ENCODE measurements at regions of chr12 and their contacts with region 1.

Region 1: DNA sequence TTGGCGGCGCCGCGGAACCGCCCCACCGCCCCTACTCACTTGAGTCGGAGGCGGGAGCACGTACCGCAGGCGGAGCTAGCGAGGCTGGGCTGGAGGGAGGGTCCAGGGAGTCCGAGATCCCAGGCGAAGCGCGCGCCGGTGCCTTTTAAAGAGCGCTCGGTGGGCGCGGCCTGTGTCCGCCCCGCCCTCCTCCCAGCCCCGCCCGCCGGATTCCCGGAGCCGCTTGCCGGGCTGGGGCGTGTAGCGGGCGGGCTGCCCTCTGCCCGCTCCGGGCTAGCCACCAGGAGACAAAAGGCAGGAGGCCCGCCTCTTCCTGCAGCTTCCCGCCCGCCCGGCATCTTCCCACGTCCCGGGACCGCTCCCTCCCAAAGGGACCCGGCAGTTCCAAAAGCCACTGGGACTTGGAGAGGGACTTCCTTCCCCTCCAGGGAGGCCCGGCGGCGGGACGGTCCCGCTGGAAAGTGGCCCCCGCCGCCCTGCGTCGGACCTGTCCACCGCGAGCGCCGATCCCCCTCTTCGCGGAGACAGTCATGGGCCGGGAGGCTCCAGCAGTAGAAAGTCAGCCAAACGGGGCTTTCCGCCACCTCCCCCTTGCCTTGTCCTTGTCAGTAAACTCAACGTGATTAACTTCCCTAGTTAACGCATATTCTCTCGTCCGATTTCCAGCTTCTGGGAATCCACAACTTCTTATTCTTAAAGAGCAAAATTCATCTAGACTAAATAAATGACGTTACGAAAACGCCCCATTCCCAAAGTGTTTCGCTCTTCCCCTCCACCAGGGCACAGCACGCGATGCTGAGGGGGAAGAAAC is at the start of gene CSRP2:
- DNase-seq: peak; percentile 87
- ATAC-seq: peak; percentile 91
- H3K4me3 ChIP-seq: peak within 1 kb of the TSS; percentile 64
- H3K27ac ChIP-seq: peak within 1 kb of the TSS; percentile 89
- H3K4me1 ChIP-seq: peaks cover 14% of the 10 kb centered on the region
- H3K27me3 ChIP-seq: no peaks in the 10 kb centered on the region
- CTCF ChIP-seq: peak; percentile 34
- POLR2A ChIP-seq: peak; percentile 97
- RAD21 ChIP-seq: peak; percentile 35
- total RNA-seq, gene CSRP2: 156 and 157 TPM in 2 replicates

Region 2: GRCh38 chr12:76713130-76713529 is 166.0 kb before region 1 on chr12:
- CTCF ChIA-PET with region 1: no interaction called
- POLR2A ChIA-PET with region 1: no interaction called
- dilution Hi-C with region 1: no loop called
- in situ Hi-C with region 1: no loop called
- intact Hi-C with region 1: no loop called
- DNase-seq: no peak
- ATAC-seq: 0 out of 2 replicates have a peak, but pooled peaks have one; percentile 42
- H3K4me3 ChIP-seq: no peak overlapping the region
- H3K27ac ChIP-seq: no peak overlapping the region
- H3K4me1 ChIP-seq: peaks cover 10% of the 10 kb centered on the region
- H3K27me3 ChIP-seq: no peaks in the 10 kb centered on the region
- CTCF ChIP-seq: no peak
- POLR2A ChIP-seq: no peak
- RAD21 ChIP-seq: no peak

Region 3: DNA sequence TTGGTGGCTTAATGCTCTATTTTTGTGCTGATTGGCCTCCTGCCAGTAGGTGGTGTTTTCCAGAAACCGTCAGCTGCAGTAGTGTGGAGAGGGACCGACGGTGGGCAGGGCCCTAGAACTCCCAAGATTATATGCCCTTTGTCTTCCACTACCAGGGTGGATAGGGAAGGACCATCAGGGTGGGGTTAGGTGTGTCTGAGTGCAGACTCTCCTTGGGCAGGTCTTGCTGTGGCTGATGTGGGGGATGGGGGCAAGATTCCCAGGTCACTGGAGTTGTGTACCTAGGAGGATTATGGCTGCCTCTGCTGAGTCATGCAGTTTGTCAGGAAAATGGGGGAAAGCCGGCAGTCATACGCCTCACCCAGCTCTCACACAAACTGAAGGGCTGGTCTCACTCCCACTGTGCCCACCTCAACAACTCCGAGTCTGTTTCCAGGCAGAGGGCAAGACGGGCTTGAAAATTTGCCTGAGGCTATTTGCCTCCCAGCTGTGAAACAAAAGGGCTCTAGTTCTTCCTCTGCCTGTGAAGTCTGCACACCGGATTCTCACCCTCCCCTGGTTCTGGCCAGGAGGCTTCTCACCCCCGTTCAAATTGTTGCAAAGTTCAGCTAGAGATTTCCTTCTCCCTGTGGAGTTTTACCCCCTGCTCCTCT is 140.0 kb before region 1 on chr12:
- CTCF ChIA-PET with region 1: no interaction called
- POLR2A ChIA-PET with region 1: no interaction called
- dilution Hi-C with region 1: no loop called
- in situ Hi-C with region 1: no loop called
- intact Hi-C with region 1: no loop called
- DNase-seq: no peak
- ATAC-seq: no peak
- H3K4me3 ChIP-seq: no peak overlapping the region
- H3K27ac ChIP-seq: no peak overlapping the region
- H3K4me1 ChIP-seq: no peaks in the 10 kb centered on the region
- H3K27me3 ChIP-seq: no peaks in the 10 kb centered on the region
- CTCF ChIP-seq: no peak
- POLR2A ChIP-seq: no peak
- RAD21 ChIP-seq: no peak

Region 4: GRCh38 chr12:76864791-76865400 is 14.2 kb before region 1 on chr12:
- CTCF ChIA-PET with region 1: interaction called, 3 read pairs
- POLR2A ChIA-PET with region 1: interaction called, 6 read pairs
- dilution Hi-C with region 1: no loop called
- in situ Hi-C with region 1: no loop called
- intact Hi-C with region 1: loop called (anchors 1 kb)
- DNase-seq: peak; percentile 65
- ATAC-seq: peak; percentile 30
- H3K4me3 ChIP-seq: no peak overlapping the region
- H3K27ac ChIP-seq: no peak overlapping the region
- H3K4me1 ChIP-seq: peaks cover 17% of the 10 kb centered on the region
- H3K27me3 ChIP-seq: no peaks in the 10 kb centered on the region
- CTCF ChIP-seq: no peak
- POLR2A ChIP-seq: no peak
- RAD21 ChIP-seq: no peak

Region 5: DNA sequence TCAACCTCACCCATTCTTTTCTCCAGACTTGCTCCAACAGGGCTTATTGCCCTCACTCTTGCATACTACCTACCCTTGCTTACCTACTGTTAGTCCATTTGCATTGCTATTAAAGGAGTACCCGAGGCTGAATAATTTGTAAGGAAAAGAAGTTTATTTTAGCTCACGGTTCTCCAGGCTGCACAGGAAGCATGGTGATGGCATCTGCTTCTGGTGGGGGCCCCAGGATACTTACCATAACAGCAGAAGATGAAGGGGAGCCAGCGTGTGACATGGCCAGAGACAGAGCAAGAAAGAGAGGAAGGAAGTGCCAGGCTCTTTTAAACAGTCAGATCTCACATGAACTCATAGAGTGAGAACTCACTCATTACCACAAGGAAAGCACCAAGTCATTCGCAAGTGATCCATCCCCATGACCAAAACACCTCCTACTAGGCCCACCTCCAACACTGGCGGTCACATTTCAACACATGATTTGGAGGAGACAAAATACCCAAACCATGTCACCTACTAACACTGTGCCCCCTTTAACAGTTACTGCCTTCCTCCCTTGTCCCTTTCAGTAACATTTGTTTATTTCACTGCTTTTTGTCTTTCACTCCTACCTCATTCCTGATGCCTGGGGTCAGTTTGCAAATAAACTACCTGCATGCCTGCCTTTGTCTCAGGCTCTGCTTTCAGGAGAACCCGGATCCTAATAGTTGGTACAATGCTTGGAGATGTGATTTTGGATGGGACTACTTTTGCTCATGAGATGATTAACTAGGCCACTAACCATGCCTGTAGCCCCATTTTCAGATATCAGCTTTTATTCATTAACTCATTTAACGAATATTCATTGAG is 41.3 kb after region 1 on chr12:
- CTCF ChIA-PET with region 1: interaction called, 3 read pairs
- POLR2A ChIA-PET with region 1: no interaction called
- dilution Hi-C with region 1: no loop called
- in situ Hi-C with region 1: no loop called
- intact Hi-C with region 1: loop called (anchors 5 kb)
- DNase-seq: no peak
- ATAC-seq: no peak
- H3K4me3 ChIP-seq: no peak overlapping the region
- H3K27ac ChIP-seq: no peak overlapping the region
- H3K4me1 ChIP-seq: peaks cover 4% of the 10 kb centered on the region; the same call in 1 of the 2 replicates
- H3K27me3 ChIP-seq: no peaks in the 10 kb centered on the region
- CTCF ChIP-seq: no peak
- POLR2A ChIP-seq: no peak
- RAD21 ChIP-seq: no peak

Region 6: DNA sequence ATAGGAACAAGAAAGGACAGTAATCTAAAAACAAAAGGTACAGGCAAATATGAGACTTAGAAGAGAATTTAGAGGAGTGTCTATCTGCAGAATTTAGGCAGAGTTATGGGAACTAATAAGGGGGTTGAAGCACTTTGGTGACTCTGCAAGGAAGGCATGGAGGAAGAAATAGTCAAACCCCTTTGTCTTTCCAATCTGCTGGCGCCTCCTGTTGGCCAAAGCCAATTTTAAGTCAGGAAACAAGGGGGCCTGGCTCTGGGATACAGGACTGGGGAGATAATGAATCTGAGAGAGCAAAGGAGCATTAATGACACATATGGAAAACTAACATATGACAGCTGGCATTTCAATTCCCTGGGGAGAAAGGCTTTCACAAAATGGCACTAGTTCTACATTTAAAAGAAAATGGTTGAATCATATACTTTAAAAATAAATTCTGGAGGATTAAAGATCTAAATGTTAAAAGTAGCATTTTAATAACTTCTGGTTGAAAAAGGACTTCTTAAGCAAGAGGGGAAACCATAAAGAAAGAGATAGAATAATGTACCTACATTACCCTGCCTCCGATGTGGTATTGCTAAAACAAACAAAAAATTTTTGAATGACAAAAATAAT is 48.2 kb after region 1 on chr12:
- CTCF ChIA-PET with region 1: no interaction called
- POLR2A ChIA-PET with region 1: no interaction called
- dilution Hi-C with region 1: no loop called
- in situ Hi-C with region 1: no loop called
- intact Hi-C with region 1: loop called (anchors 2 kb)
- DNase-seq: peak; percentile 57
- ATAC-seq: peak; percentile 86
- H3K4me3 ChIP-seq: no peak overlapping the region
- H3K27ac ChIP-seq: no peak overlapping the region
- H3K4me1 ChIP-seq: peaks cover 3% of the 10 kb centered on the region; the same call in 1 of the 2 replicates
- H3K27me3 ChIP-seq: no peaks in the 10 kb centered on the region; the same call in 1 of the 2 replicates
- CTCF ChIP-seq: peak; percentile 64
- POLR2A ChIP-seq: no peak
- RAD21 ChIP-seq: peak; percentile 74

Measured in IMR-90 (cell line).